ENCODE measurements at regions of chr12 and their contacts with region 1.

Region 1: DNA sequence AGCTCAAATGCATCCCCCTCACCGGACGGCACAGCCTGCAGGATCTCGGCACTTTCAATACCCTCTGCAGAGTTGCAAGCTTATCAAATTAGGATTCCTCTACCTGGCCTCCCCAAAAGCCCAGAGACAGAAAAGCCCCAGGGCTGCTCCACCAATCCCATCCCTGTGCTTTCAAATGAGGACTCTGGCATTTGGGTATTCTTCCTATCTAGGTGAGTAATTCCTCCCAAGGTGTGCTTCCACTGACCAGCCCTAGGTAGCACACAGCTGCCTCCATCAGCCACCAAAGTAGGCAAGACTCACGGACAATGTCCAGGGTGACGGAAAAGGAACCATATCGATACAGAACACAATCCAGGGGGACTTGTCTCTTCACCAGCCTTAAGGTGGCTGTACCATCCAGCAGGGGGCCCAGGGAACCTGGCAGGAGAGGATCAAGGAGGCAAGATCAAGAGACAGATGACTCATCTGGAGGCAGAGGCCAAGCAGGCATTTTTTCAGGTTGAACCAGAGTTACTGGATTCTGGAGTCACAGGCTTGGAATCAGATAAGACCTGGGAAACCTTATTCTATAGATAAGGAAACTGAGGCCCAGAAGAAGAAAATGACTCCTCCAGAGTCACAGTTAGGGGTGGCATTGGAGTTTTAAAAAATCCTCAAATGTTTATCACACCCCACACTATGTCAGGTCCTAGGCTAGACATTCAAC is 9.9 kb downstream of the PMEL start:
- DNase-seq: peak in 8 of 9 experiments; percentile 33 to 69 (median 53)
- ATAC-seq: peak; percentile 80
- H3K4me3 ChIP-seq: no peak overlapping the region
- H3K4me3 Mint-ChIP-seq: no peak overlapping the region
- H3K27ac ChIP-seq: peak overlapping the region in 1 of 2 experiments; percentile 18
- H3K27ac Mint-ChIP-seq: peak overlapping the region; percentile 88
- H3K4me1 ChIP-seq: no peaks in the 10 kb centered on the region
- H3K4me1 Mint-ChIP-seq: peaks cover 31% of the 10 kb centered on the region
- H3K27me3 ChIP-seq: no peaks in the 10 kb centered on the region
- H3K27me3 Mint-ChIP-seq: no peaks in the 10 kb centered on the region
- CTCF ChIP-seq: peak; percentile 34

Region 2: GRCh38 chr12:55931780-55932550 is 24.0 kb before region 1 on chr12:
- CTCF ChIA-PET with region 1: interaction called, 6 read pairs
- POLR2A ChIA-PET with region 1: interaction called, 15 read pairs
- intact Hi-C with region 1: no loop called
- DNase-seq: peak in 7 of 9 experiments; percentile 18 to 69 (median 46)
- ATAC-seq: no peak
- H3K4me3 ChIP-seq: peak overlapping the region; percentile 82 to 91
- H3K4me3 Mint-ChIP-seq: peak overlapping the region; percentile 99
- H3K27ac ChIP-seq: peak overlapping the region; percentile 65 to 90
- H3K27ac Mint-ChIP-seq: peak overlapping the region; percentile 95
- H3K4me1 ChIP-seq: peaks cover 60% of the 10 kb centered on the region
- H3K4me1 Mint-ChIP-seq: peaks cover 63% of the 10 kb centered on the region
- H3K27me3 ChIP-seq: no peaks in the 10 kb centered on the region
- H3K27me3 Mint-ChIP-seq: no peaks in the 10 kb centered on the region
- CTCF ChIP-seq: no peak

Region 3: DNA sequence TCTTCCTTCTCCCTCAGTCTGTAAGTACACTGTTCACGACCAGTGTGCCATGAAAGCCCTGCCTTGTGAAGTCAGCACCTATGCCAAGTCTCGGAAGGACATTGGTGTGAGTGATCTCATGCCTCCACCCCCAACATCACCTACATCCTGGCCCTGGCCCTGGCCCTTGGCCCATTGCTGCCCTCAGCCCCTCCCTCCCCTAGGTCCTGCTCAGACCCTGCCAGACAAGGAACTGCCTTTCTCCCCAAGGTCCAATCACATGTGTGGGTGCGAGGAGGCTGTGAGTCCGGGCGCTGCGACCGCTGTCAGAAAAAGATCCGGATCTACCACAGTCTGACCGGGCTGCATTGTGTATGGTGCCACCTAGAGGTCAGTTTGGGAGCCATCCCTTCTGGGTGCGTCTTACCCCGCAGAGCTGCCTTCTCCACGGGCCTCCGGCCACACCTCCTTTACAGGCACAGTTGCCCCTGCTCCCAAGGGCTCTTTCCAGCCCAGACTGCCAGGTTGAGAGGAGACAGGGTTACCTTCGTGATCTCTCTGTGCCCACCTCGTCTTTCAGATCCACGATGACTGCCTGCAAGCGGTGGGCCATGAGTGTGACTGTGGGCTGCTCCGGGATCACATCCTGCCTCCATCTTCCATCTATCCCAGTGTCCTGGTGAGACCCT is 15.8 kb before region 1 on chr12:
- CTCF ChIA-PET with region 1: interaction called, 12 read pairs
- POLR2A ChIA-PET with region 1: interaction called, 19 read pairs
- intact Hi-C with region 1: no loop called
- DNase-seq: peak; percentile 68 to 91 (median 87)
- ATAC-seq: peak; percentile 92
- H3K4me3 ChIP-seq: no peak overlapping the region
- H3K4me3 Mint-ChIP-seq: peak overlapping the region; percentile 52
- H3K27ac ChIP-seq: peak overlapping the region in 1 of 2 experiments; percentile 60
- H3K27ac Mint-ChIP-seq: peak overlapping the region; percentile 87
- H3K4me1 ChIP-seq: peaks cover 55% of the 10 kb centered on the region
- H3K4me1 Mint-ChIP-seq: peaks cover 84% of the 10 kb centered on the region
- H3K27me3 ChIP-seq: no peaks in the 10 kb centered on the region
- H3K27me3 Mint-ChIP-seq: no peaks in the 10 kb centered on the region
- CTCF ChIP-seq: peak; percentile 84

Region 4: DNA sequence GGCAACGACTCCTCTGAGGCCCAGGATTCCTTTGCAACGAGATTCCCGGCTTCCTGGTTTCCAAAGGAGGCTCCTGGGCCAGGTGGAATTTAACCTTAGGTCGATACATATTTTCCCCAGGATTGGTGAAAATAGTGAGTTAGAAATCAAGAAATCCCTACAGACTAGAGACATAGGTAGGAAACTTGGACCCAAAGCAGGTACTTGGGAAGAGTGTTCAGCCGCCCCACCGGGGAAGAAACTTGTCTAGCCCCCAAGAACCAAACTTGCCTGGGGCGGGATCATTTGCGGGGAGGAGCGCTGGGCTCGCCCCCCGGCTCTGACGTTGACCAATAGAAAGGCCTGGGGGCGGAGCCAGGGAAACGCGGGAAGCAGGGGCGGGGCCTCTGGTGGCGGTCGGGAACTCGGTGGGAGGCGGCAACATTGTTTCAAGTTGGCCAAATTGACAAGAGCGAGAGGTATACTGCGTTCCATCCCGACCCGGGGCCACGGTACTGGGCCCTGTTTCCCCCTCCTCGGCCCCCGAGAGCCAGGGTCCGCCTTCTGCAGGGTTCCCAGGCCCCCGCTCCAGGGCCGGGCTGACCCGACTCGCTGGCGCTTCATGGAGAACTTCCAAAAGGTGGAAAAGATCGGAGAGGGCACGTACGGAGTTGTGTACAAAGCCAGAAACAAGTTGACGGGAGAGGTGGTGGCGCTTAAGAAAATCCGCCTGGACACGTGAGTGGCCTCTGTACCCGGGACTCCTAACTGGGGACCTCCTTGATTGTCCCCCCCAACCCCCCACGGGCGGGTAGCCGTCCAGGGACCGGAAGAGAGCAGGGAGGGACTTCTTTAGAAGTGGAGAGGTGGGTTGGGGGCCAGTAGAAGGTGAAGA is 10.7 kb after region 1 on chr12 and contains the start of gene CDK2:
- CTCF ChIA-PET with region 1: interaction called, 4 read pairs
- POLR2A ChIA-PET with region 1: interaction called, 5 read pairs
- intact Hi-C with region 1: loop called in 1 of 2 experiments (anchors 1 kb)
- DNase-seq: peak; percentile 61 to 92 (median 91)
- ATAC-seq: peak; percentile 98
- H3K4me3 ChIP-seq: peak within 1 kb of the TSS; percentile 70 to 81
- H3K4me3 Mint-ChIP-seq: peak within 1 kb of the TSS; percentile 90
- H3K27ac ChIP-seq: peak within 1 kb of the TSS; percentile 41 to 46
- H3K27ac Mint-ChIP-seq: peak within 1 kb of the TSS; percentile 85
- H3K4me1 ChIP-seq: peaks cover 18% of the 10 kb centered on the region
- H3K4me1 Mint-ChIP-seq: peaks cover 34% of the 10 kb centered on the region
- H3K27me3 ChIP-seq: no peaks in the 10 kb centered on the region
- H3K27me3 Mint-ChIP-seq: no peaks in the 10 kb centered on the region
- CTCF ChIP-seq: no peak
- total RNA-seq, gene CDK2: 12.8 to 13.5 TPM

Measured in CD8-positive, alpha-beta T cell (primary cell).